ENCODE measurements at regions of chr1 and their contacts with region 1.

Region 1: GRCh38 chr1:16073490-16074119 is at the start of gene FAM131C:
- DNase-seq: peak; percentile 75
- CTCF ChIP-seq: peak; percentile 56

Region 2: DNA sequence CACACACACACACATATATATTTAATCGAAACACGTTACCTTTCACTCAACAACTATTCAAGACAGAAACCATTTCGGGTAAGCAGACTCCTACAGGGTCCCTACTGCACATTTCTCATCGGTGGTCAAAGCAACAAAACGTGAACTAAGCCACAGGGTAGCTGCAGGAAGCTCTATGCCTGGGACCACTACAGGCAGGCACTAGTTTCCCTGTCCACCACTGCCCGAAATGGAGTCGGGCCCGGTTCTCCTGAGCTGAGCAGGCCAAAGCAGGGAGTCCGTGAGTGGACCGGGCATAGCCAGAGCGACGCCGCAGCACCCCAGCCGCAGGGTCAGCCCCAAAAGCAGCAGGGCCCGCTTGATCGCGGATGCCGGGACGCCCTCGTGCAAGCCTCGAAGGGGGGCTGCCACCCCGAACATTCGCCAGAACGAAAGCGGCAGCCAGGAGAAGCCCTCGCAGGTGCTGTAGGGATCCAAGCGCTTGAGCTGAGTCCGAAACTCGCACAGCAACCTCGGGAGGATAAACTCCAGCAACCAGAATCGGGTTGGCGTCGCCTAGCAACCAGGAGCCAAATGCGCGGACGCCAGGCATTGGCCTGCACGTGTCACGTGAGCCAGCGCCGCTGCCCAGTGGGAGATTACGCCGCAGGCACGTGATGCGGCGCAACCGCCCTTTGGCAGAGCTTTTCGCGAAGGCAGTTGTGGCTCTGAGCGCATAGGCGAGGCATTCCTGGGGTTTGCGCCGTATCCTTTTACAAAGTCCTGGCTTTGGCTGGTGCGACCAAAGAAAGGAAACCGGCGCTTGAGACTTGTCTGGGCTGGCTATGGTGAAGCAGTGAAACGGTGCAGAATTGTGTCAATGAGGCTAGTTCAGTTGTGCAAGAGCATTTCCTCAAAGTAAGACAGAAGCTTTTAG is 470.3 kb before region 1 on chr1:
- CTCF ChIA-PET with region 1: no interaction called
- POLR2A ChIA-PET with region 1: no interaction called
- DNase-seq: peak; percentile 95
- CTCF ChIP-seq: no peak

Region 3: GRCh38 chr1:16021681-16022080 is 51.9 kb before region 1 on chr1 and contains the start of gene CLCNKA:
- CTCF ChIA-PET with region 1: no interaction called
- POLR2A ChIA-PET with region 1: no interaction called
- DNase-seq: no peak
- CTCF ChIP-seq: no peak

Region 4: DNA sequence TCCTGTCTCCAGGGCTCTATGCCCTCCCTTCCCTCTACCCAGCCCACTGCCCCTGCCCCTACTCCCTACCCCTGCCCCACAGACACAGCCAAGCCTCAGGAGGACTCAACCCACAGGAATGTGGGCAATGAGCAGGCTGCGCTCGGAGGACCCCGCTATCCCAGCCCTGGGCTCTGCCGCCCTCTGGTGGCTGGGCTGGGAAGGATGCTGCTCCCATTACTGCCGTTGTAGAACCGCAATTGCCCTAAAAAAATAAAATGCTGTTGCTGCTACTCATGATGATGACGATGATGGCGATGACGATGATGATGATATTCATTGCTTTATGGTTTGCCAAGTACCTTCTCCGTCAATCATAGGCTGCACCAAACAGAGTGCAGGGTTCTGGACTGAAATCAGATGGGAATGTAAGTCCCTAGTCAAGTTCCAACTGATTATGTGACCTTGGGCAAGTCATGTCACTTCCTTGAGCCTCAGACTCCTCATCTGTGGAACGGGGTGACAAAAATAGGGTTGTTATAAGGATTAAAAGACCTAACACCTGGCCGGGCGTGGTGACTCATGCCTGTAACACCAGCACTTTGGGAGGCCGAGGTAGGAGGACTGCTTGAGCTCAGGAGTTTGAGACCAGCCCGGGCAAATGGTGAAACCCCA is 114.3 kb after region 1 on chr1:
- CTCF ChIA-PET with region 1: interaction called, 328 read pairs
- POLR2A ChIA-PET with region 1: no interaction called
- DNase-seq: peak; percentile 86
- CTCF ChIP-seq: peak; percentile 99